Activated T-helper 2 cell treated with anti-CD3 and anti-CD28 coated beads, Interferon-gamma antibody, Interleukin-2, Interleukin-4, amounts not matched to agents 10 μg/mL and 5 μg/mL and 100 μg/mL, durations not matched to agents 14 hours and 24 hours and 36 hours (primary cell): ENCODE measurements at regions of chr7 and their contacts with region 1.

Region 1: DNA sequence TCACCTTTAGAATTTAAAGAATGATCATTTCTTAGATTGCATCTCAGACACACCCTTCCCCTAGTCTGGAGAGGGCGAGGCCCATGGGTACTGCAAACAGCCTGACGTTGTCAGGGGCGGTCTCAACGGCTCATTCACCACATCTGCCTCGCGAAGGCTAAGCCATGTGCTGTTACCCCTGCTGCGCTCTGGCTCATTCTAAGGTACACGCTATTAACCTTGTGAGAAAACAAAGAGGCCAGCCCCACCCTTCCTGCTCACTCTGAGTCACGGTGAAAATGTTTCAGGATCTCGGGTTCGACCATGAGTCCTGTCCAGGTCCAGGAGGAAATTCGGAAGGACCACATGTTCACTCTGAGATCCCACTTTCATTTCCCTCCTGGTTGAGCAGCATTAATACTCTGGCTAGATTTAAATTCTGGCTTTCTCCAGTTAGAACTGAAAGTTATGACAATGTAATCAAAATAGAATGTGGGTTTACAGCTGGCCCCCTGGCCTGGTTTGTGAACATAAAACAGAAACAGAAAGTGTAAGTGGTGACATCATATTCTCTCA is 55.2 kb downstream of the EGFR start:
- DNase-seq: peak; percentile 46
- H3K4me3 Mint-ChIP-seq: peak overlapping the region; percentile 4
- H3K27ac Mint-ChIP-seq: peak overlapping the region; percentile 25
- H3K4me1 Mint-ChIP-seq: peaks cover 14% of the 10 kb centered on the region
- H3K27me3 Mint-ChIP-seq: peaks cover 16% of the 10 kb centered on the region

Region 2: GRCh38 chr7:54179321-54180029 is 894.5 kb before region 1 on chr7:
- intact Hi-C with region 1: no loop called
- DNase-seq: no peak
- H3K4me3 Mint-ChIP-seq: no peak overlapping the region
- H3K27ac Mint-ChIP-seq: no peak overlapping the region
- H3K4me1 Mint-ChIP-seq: no peaks in the 10 kb centered on the region
- H3K27me3 Mint-ChIP-seq: no peaks in the 10 kb centered on the region

Region 3: DNA sequence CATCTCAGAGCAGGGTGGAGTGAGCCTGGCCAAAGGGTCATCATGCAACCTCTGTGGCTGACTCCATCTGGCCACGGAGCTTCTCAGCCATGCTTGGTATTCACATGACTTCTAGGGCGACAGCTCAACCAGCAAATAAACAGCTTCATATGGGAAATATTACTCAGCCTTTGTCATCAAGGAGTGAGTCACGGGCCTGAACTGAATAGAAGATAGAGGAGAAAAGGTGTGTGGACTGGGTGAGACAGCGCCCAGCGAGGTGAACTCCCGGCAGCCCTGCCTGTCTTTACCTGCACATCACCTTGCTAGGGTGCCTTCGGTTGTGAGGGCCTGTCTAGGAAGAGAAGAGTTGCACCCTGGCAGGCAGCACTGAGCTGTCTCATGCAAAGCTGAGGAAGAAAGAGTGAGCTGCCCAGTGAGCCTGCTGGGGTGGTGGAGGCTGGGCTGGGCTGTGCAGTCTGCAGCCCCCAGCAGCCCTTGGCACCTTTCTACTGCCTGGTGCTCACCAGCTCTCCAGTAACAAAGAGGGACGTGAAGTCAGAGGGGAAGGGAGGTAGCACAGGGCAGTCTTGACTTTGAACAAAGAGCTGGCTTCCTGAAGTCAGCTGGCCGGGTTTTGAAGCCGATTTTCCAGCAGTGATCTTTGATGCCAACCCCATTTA is 59.0 kb after region 1 on chr7:
- intact Hi-C with region 1: loop called (anchors 5 kb)
- DNase-seq: no peak
- H3K4me3 Mint-ChIP-seq: no peak overlapping the region
- H3K27ac Mint-ChIP-seq: peak overlapping the region; percentile 28
- H3K4me1 Mint-ChIP-seq: peaks cover 27% of the 10 kb centered on the region
- H3K27me3 Mint-ChIP-seq: peaks cover 21% of the 10 kb centered on the region